Lower leg skin (tissue), 4 donors: ENCODE measurements at regions of chr12 and their contacts with region 1.

Region 1: DNA sequence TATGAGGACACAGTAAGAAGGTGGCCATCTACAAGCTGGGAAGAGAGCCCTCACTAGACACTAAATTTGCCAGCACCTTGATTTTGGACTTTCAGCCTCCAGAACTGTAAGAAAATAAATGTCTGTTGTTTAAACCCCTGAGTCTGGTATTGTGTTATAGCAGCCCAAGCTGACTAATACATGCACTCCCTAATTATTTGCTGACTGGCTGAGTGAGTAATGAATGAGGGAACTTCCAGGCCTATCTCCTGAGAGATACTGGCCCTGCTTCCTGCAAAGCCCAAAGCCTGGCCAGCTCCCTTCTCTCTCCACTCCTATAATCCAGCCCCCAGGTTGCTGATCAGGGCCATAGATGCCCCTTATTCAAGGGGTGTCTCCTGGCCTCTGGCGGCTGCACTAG is 120.0 kb upstream of the NOS1 start:
- DNase-seq: no peak
- H3K4me3 ChIP-seq: no peak overlapping the region
- CTCF ChIP-seq: no peak
- POLR2A ChIP-seq: no peak

Region 2: GRCh38 chr12:116749884-116750283 is 731.6 kb before region 1 on chr12:
- intact Hi-C with region 1: no loop called
- DNase-seq: no peak
- H3K4me3 ChIP-seq: no peak overlapping the region
- CTCF ChIP-seq: no peak
- POLR2A ChIP-seq: no peak

Region 3: DNA sequence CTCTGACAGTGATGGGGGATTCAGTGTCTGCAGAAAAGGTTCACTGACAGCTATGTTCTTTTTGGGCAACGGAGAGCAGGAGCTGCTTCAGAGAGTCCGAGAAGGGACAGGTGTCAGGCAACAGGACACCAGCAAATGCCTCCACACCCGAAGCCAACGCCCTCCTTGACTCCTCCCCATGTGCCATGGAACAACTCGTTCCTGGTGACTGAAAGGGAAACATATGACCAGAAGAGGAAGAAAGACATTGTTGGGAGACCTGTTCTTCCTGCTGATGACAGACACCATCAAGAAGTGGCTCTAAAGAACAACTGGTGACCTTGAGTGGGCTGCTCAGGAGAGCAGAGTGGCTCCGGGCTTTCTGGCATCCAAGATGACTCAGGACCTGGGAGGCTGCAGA is 52.2 kb after region 1 on chr12:
- intact Hi-C with region 1: no loop called
- DNase-seq: no peak
- H3K4me3 ChIP-seq: no peak overlapping the region
- CTCF ChIP-seq: no peak
- POLR2A ChIP-seq: no peak

Region 4: DNA sequence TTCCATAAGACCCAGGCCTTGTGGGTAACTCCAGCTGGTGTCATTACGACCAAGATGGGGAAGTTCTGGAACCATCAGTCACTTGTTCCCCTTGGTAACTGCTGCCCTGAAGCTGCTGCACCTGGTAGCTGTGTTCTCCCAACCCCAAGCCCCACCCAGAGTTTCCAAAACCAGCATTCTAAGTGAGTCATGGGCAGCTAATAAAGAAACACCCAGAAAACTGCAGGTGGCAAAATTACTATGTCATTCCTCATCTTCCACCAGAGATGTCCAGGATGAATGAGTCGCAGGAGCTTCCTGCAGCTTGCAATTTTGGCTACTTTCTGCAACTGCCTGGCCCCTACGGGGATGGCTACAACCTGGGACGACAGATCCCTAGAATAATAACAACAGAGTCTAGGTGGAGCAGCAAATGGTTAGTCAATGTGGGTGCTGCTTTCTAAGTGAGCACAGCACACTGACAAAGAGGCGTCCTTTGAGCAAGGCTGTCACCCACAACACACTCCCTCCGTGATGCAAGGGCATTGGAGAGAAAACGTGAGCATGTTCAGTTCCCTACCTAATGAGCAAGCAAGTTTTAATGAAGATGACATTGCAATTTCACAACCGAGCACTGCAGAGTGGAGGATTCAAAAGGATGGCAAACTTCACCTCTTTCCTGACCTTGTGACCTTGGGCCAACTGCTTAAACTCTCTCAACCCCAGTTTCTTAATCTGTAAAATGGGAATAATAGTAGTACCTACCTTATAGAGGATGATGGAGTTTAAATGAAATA is 181.3 kb after region 1 on chr12:
- intact Hi-C with region 1: no loop called
- DNase-seq: no peak
- H3K4me3 ChIP-seq: no peak overlapping the region
- CTCF ChIP-seq: no peak
- POLR2A ChIP-seq: no peak

Region 5: GRCh38 chr12:118436002-118436730 is 954.7 kb after region 1 on chr12:
- intact Hi-C with region 1: loop called (anchors 5 kb)
- DNase-seq: no peak
- H3K4me3 ChIP-seq: no peak overlapping the region
- CTCF ChIP-seq: no peak
- POLR2A ChIP-seq: no peak